Prostate gland (tissue), 2 donors: ENCODE measurements at regions of chr6 and their contacts with region 1.

Region 1: GRCh38 chr6:144215932-144216667 is 65.8 kb downstream of the STX11 start:
- DNase-seq: peak; percentile 96
- H3K4me3 ChIP-seq: peak overlapping the region; percentile 52 to 58
- H3K27ac ChIP-seq: peak overlapping the region; percentile 93 to 95
- H3K4me1 ChIP-seq: peaks cover 6% of the 10 kb centered on the region
- H3K27me3 ChIP-seq: no peaks in the 10 kb centered on the region
- CTCF ChIP-seq: peak; percentile 50 to 84 (median 67)
- POLR2A ChIP-seq: peak; percentile 45

Region 2: DNA sequence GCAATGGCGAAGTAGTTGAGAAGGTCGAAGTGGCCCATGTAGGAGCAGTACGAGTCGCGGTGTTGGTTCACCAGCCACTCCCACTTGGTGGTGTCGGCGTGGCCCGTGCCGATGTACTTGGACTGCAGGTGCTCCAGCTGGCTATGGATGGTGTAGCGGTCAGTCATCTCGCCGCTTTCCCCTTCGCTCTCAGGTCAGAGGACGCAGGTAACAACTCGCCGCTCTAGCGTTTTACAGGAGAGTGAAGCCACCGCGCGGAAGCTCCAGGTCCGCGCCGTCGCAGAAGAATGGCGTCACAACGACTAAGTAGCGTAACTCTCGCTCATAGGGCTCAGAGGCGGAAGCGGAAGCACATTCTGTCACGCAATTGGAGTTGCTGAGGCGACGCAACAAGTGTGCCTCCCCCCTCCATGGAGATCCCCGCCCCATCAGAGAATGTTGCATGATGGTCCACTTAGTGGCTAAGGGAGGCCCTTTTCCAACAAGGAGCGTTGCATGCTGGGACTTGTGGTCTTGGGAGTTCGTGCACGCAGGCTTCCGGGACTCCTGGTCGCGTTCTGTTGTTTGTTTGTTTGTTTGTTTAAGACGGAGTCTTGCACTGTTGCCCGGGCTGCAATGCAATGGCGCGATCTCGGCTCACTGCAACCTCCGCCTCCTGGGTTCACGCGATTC is 120.6 kb before region 1 on chr6 and contains the start of gene SF3B5:
- intact Hi-C with region 1: loop called (anchors 5 kb)
- DNase-seq: peak; percentile 99
- H3K4me3 ChIP-seq: peak within 1 kb of the TSS; percentile 69 to 83
- H3K27ac ChIP-seq: peak within 1 kb of the TSS; percentile 73 to 82
- H3K4me1 ChIP-seq: peaks cover 4% of the 10 kb centered on the region
- H3K27me3 ChIP-seq: no peaks in the 10 kb centered on the region
- CTCF ChIP-seq: peak in 1 of 4 experiments; percentile 21
- POLR2A ChIP-seq: peak; percentile 67
- total RNA-seq, gene SF3B5: 198 to 212 TPM

Region 3: GRCh38 chr6:144482142-144482541 is 266.0 kb after region 1 on chr6:
- intact Hi-C with region 1: loop called (anchors 5 kb)
- DNase-seq: peak; percentile 82
- H3K4me3 ChIP-seq: no peak overlapping the region
- H3K27ac ChIP-seq: no peak overlapping the region
- H3K4me1 ChIP-seq: no peaks in the 10 kb centered on the region
- H3K27me3 ChIP-seq: no peaks in the 10 kb centered on the region
- CTCF ChIP-seq: peak; percentile 57 to 77 (median 60)
- POLR2A ChIP-seq: no peak